ENCODE measurements at regions of chr1 and their contacts with region 1.

Region 1: DNA sequence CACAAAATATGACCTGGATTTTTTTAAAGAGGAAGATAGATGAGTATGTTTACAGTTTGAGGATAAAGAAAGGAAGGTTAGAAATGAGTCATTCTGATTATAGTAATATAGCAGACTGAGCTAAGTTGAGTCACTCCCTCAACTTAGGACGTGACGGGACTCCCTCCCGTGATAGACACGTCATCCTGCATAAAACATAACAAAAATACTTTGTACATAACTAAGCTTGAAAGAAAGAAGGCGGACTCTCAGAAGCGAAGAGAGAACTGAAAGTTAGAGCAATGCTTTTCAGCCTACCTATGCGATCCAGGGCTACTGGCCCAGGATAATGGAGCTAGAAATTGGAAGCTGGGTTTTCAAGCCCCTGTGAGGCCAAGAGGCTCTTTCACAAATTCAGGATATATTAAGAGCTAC is 53.0 kb upstream of the DESI2 start:
- DNase-seq: peak; percentile 72 to 82
- ATAC-seq: peak; percentile 88 to 92
- H3K4me3 ChIP-seq: peak overlapping the region; percentile 12; the same call in 1 of the 3 replicates
- H3K27ac ChIP-seq: peak overlapping the region in 1 of 2 experiments; percentile 11; a peak in 1 of 6 replicates
- H3K4me1 ChIP-seq: peaks cover 12% of the 10 kb centered on the region
- CTCF ChIP-seq: no peak
- EP300 ChIP-seq: no peak
- POLR2A ChIP-seq: no peak
- RAD21 ChIP-seq: no peak

Region 2: DNA sequence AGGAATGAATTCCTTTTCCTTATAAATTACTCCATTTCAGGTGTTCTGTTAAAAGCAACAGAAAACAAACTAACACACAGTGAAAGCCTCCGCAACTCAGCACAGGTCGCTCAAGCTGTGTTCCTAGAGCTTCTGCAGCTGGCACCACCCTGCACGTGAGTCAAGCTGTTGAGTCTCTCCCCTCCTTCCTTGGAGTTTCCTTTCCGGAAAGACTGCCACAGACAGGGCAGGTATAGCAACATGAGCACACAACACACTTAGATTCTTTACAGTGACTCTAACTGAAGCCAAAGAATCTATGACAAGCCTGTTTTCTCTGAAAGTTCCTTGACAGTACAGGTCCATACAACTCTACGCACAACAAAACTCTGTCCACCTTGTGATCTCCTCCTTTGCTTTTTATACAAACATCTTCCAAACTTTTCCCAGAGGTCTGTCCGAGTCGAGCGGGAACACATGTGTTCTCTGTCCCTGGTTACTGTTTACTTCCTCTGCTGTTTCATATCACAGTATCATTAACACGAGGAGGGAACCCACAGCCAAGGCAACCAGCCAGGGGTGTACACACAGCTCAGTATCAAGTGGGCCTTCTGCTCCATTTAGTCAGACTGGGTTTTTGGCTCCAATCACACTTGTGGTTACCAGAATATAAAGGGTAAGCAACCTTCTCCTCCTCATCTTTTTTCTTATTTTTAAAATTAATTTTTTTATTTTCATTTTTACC is 14.3 kb after region 1 on chr1:
- CTCF ChIA-PET with region 1: interaction called, 10 read pairs
- POLR2A ChIA-PET with region 1: no interaction called
- DNase-seq: no peak
- ATAC-seq: no peak
- H3K4me3 ChIP-seq: no peak overlapping the region
- H3K27ac ChIP-seq: no peak overlapping the region
- H3K4me1 ChIP-seq: no peaks in the 10 kb centered on the region
- CTCF ChIP-seq: no peak
- EP300 ChIP-seq: no peak
- POLR2A ChIP-seq: no peak
- RAD21 ChIP-seq: no peak

Region 3: GRCh38 chr1:244647819-244648218 is 47.9 kb after region 1 on chr1:
- CTCF ChIA-PET with region 1: interaction called, 12 read pairs
- POLR2A ChIA-PET with region 1: interaction called, 3 read pairs
- DNase-seq: no peak
- ATAC-seq: no peak
- H3K4me3 ChIP-seq: no peak overlapping the region
- H3K27ac ChIP-seq: no peak overlapping the region
- H3K4me1 ChIP-seq: peaks cover 3% of the 10 kb centered on the region; the same call in 1 of the 3 replicates
- CTCF ChIP-seq: no peak
- EP300 ChIP-seq: no peak
- POLR2A ChIP-seq: no peak
- RAD21 ChIP-seq: no peak

Region 4: GRCh38 chr1:244652699-244653466 is 52.9 kb after region 1 on chr1 and contains the start of gene DESI2:
- CTCF ChIA-PET with region 1: interaction called, 12 read pairs
- POLR2A ChIA-PET with region 1: interaction called, 3 read pairs
- DNase-seq: peak; percentile 97 to 99
- ATAC-seq: peak; percentile 98
- H3K4me3 ChIP-seq: peak within 1 kb of the TSS; percentile 92
- H3K27ac ChIP-seq: peak within 1 kb of the TSS; percentile 93 to 96
- H3K4me1 ChIP-seq: peaks cover 13% of the 10 kb centered on the region; the same call in 2 of the 3 replicates
- CTCF ChIP-seq: peak; percentile 70
- EP300 ChIP-seq: no peak
- POLR2A ChIP-seq: peak; percentile 96
- RAD21 ChIP-seq: peak; percentile 28 to 61; a peak in 4 of 5 replicates
- polyA plus RNA-seq, gene DESI2: 48.4 and 57.8 TPM in 2 replicates

Region 5: GRCh38 chr1:244796718-244797406 is 196.9 kb after region 1 on chr1:
- CTCF ChIA-PET with region 1: interaction called, 107 read pairs
- POLR2A ChIA-PET with region 1: no interaction called
- DNase-seq: peak; percentile 42 to 67
- ATAC-seq: peak; percentile 67 to 81; a peak in 3 of 6 replicates
- H3K4me3 ChIP-seq: no peak overlapping the region
- H3K27ac ChIP-seq: no peak overlapping the region
- H3K4me1 ChIP-seq: no peaks in the 10 kb centered on the region
- CTCF ChIP-seq: peak; percentile 89
- EP300 ChIP-seq: no peak
- POLR2A ChIP-seq: no peak
- RAD21 ChIP-seq: peak; percentile 81 to 92

Measured in A549 (cell line).